ENCODE measurements at regions of chr7 and their contacts with region 1.

Region 1: GRCh38 chr7:42831718-42832431 is 80.0 kb downstream of the C7orf25 start:
- DNase-seq: peak; percentile 53
- H3K4me3 ChIP-seq: no peak overlapping the region
- H3K27ac ChIP-seq: peak overlapping the region in 1 of 2 donors; percentile 16
- H3K4me1 ChIP-seq: peaks cover 14% of the 10 kb centered on the region
- H3K27me3 ChIP-seq: no peaks in the 10 kb centered on the region
- CTCF ChIP-seq: peak; percentile 30 to 72 (median 68)
- POLR2A ChIP-seq: no peak

Region 2: GRCh38 chr7:42700406-42701327 is 131.2 kb before region 1 on chr7:
- intact Hi-C with region 1: loop called (anchors 5 kb)
- DNase-seq: no peak
- H3K4me3 ChIP-seq: no peak overlapping the region
- H3K27ac ChIP-seq: no peak overlapping the region
- H3K4me1 ChIP-seq: no peaks in the 10 kb centered on the region
- H3K27me3 ChIP-seq: no peaks in the 10 kb centered on the region
- CTCF ChIP-seq: peak in 1 of 4 experiments; percentile 3
- POLR2A ChIP-seq: no peak

Region 3: GRCh38 chr7:42924223-42924838 is 92.5 kb after region 1 on chr7:
- intact Hi-C with region 1: no loop called
- DNase-seq: no peak
- H3K4me3 ChIP-seq: no peak overlapping the region
- H3K27ac ChIP-seq: no peak overlapping the region
- H3K4me1 ChIP-seq: peaks cover 7% of the 10 kb centered on the region
- H3K27me3 ChIP-seq: no peaks in the 10 kb centered on the region
- CTCF ChIP-seq: no peak
- POLR2A ChIP-seq: no peak

Measured in prostate gland (tissue), 2 donors.